Activated CD4-positive, alpha-beta memory T cell treated with anti-CD3 and anti-CD28 coated beads for 36 hours (primary cell): ENCODE measurements at regions of chr11 and their contacts with region 1.

Region 1: GRCh38 chr11:96242971-96243647 is 99.9 kb downstream of the MAML2 start:
- DNase-seq: peak; percentile 91
- H3K4me3 Mint-ChIP-seq: peak overlapping the region; percentile 78
- H3K27ac Mint-ChIP-seq: peak overlapping the region; percentile 95
- H3K4me1 Mint-ChIP-seq: peaks cover 53% of the 10 kb centered on the region
- H3K27me3 Mint-ChIP-seq: no peaks in the 10 kb centered on the region

Region 2: DNA sequence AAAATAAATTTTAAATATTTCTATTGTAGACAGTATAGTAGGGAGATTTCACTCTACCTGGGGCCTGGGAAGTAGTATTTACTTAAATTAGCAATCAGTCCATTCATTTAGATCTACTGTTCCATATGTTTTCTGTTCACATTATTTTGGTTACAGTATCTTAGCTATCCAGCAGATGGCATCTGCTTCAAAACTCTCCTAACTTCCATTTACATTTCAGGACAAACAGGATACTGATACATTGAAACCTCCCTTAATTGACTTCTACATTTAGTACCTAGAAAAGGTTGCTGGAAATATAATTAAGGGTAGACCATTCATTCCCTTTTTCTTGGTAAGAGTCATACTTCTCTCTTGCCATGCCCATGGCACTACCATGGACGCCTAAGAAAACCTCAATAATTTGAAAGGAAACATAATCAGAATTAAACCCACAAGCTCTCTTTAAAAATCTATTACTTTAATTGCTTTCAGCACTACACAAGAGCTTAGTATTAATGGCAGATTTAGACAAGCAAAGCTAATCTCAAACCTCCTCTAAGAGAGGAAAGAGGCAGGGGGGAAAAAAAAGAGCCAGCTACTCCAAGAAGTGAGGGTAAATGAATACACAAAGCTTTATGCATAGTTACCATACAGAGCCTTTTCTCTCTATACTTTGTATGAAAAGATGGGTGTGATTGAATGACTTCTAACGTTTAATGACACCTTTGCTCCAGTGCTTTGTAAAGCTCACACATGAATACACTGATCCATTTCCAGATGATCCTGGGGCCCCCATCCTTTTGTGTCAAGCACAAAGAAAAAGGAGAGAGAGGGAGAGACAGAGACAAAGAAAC is 188.0 kb before region 1 on chr11:
- CTCF ChIA-PET with region 1: interaction called, 12 read pairs
- POLR2A ChIA-PET with region 1: no interaction called
- intact Hi-C with region 1: loop called (anchors 1 kb)
- DNase-seq: no peak
- H3K4me3 Mint-ChIP-seq: no peak overlapping the region
- H3K27ac Mint-ChIP-seq: peak overlapping the region; percentile 75
- H3K4me1 Mint-ChIP-seq: peaks cover 82% of the 10 kb centered on the region
- H3K27me3 Mint-ChIP-seq: no peaks in the 10 kb centered on the region

Region 3: GRCh38 chr11:96287822-96288439 is 44.8 kb after region 1 on chr11:
- CTCF ChIA-PET with region 1: no interaction called
- POLR2A ChIA-PET with region 1: no interaction called
- intact Hi-C with region 1: loop called (anchors 2 kb)
- DNase-seq: no peak
- H3K4me3 Mint-ChIP-seq: no peak overlapping the region
- H3K27ac Mint-ChIP-seq: peak overlapping the region; percentile 31
- H3K4me1 Mint-ChIP-seq: peaks cover 79% of the 10 kb centered on the region
- H3K27me3 Mint-ChIP-seq: no peaks in the 10 kb centered on the region

Region 4: DNA sequence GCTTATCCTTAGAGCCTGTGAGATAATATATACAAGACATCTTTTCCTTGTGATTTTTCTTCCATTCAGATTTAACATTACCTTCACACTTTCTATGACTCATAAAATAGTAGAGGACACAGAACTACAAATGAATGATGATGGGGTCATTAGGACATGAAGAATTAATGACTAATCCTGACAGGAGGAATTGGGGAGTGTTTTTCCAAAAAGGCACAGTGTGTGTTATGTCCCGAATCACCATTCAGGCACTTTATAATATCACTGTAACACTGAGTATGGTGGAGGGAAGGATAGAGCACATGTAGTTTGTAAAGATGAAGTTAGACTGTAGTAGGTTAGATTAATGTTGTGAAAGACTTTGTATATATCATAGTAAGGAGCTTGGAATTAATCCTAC is 538.0 kb after region 1 on chr11:
- CTCF ChIA-PET with region 1: no interaction called
- POLR2A ChIA-PET with region 1: no interaction called
- intact Hi-C with region 1: no loop called
- DNase-seq: no peak
- H3K4me3 Mint-ChIP-seq: no peak overlapping the region
- H3K27ac Mint-ChIP-seq: no peak overlapping the region
- H3K4me1 Mint-ChIP-seq: no peaks in the 10 kb centered on the region
- H3K27me3 Mint-ChIP-seq: no peaks in the 10 kb centered on the region